Activated T-helper 2 cell treated with anti-CD3 and anti-CD28 coated beads, Interferon-gamma antibody, Interleukin-2, Interleukin-4, amounts not matched to agents 10 μg/mL and 5 μg/mL and 100 μg/mL, durations not matched to agents 14 hours and 24 hours and 36 hours (primary cell): ENCODE measurements at regions of chr9 and their contacts with region 1.

Region 1: DNA sequence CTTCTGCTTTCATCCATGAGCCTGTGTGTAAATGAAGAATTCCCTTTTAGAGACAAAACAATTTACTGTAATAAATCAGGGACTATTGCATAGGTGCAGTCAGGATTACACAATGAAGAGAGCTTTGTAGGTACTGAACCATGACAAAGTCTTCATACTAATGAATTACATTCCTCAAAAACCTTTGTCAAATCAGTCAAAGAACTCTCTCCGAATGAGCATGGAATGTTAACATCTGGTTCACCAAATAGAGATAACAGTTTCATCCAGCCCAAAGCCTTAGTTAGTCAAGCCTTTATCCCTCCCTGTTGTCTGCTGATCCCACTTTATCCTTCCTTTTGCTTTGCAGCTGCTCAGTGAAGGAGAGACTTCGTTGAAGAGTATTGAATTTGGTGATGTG is 62.9 kb upstream of the DMRTA1 start:
- DNase-seq: no peak
- H3K4me3 Mint-ChIP-seq: no peak overlapping the region
- H3K27ac Mint-ChIP-seq: no peak overlapping the region
- H3K4me1 Mint-ChIP-seq: no peaks in the 10 kb centered on the region
- H3K27me3 Mint-ChIP-seq: no peaks in the 10 kb centered on the region

Region 2: GRCh38 chr9:22274477-22274876 is 109.2 kb before region 1 on chr9:
- intact Hi-C with region 1: no loop called
- DNase-seq: no peak
- H3K4me3 Mint-ChIP-seq: no peak overlapping the region
- H3K27ac Mint-ChIP-seq: no peak overlapping the region
- H3K4me1 Mint-ChIP-seq: no peaks in the 10 kb centered on the region
- H3K27me3 Mint-ChIP-seq: peaks cover 2% of the 10 kb centered on the region

Region 3: GRCh38 chr9:22285066-22285465 is 98.7 kb before region 1 on chr9:
- intact Hi-C with region 1: loop called (anchors 10 kb)
- DNase-seq: no peak
- H3K4me3 Mint-ChIP-seq: no peak overlapping the region
- H3K27ac Mint-ChIP-seq: no peak overlapping the region
- H3K4me1 Mint-ChIP-seq: no peaks in the 10 kb centered on the region
- H3K27me3 Mint-ChIP-seq: no peaks in the 10 kb centered on the region